ENCODE measurements at regions of chr2 and their contacts with region 1.

Region 1: DNA sequence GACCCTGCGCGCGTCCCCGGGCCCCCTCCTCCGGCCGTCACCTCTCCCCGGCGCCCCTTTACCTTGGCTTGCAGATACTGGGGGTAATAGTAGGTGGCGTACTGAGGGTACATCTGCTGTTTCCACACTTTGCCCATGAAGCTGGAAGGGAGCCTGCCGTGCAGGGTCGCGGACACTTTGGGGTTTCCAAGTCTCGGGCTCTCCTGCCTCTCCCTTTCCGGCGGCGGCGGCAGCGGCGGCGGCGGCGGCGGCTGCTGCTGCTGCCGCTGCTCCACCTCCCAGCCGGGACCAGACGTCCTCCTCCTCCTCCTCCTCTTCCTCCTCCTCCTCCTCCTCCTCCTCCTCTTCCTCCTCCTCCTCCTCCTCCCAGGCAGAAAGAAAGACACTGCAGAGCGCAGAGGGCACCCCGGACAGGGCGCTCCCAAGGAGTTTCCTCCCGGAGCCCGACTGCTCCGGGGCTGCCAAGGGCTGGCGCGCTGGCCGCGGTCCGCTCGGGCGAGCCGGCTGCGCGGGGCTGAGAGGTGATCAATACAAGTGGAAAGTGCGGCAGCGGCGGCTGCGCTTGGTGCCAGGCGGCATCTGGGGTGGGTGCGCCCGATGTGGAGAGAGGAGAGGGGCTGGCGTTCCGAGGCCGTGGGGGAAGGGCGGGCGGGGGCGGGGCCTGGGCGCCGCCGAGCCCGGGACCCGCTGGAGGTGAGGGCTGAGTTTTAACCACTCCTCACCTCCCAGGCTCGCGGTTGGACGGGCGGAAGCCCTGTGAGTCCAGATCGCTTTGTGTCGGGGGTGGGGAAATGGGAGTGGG is at the start of gene RBMS1:
- DNase-seq: peak; percentile 74 to 84 (median 80)
- ATAC-seq: peak; percentile 72 to 83 (median 80)
- H3K4me3 ChIP-seq: peak within 1 kb of the TSS; percentile 72 to 98 (median 88)
- H3K27ac ChIP-seq: peak within 1 kb of the TSS; percentile 94 to 98 (median 98)
- H3K4me1 ChIP-seq: peaks cover 0 to 40% (median 14%) of the 10 kb centered on the region in 12 donors
- H3K27me3 ChIP-seq: no peaks in the 10 kb centered on the region
- CTCF ChIP-seq: peak in 1 of 12 donors; percentile 7
- POLR2A ChIP-seq: peak in 1 of 2 donors; percentile 42
- total RNA-seq, gene RBMS1: 44.2 to 102 (median 61.5) TPM

Region 2: DNA sequence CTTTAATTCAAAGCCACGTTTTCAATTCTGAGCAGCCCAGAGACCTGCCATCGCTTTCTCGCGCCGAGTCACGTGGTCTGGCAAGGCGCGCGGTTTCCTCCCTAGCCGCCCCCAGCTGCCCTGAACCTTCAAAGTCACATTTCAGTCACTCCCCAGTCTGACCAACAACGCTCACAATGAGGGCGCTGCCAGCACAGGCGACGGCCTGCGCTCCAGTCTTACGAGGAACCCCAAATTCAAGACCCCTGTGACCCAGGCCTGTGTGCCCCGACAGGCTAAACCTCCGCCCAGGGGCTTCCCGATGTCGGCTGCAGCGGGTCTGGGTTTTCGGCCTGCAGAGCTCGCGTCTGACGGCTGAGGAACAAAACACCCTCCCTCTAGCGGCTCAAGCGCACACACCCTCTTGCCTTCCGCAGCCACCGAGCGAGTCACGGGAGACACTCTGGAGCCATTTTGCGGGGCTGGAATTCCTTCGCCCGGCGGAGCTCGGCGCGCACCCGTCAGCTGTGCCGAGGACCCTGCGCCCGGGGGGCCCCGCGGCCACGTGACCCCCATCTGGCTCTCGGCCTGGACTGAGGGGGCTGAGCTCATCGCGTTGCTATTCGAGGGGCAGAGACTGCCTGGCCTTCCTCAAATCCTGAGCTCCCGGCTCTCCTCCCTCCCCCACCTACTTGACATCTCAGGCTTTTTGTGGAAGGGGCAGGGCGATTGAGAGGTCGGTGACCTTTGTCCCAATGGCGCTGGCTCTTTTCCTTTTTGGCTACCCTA is 223.4 kb before region 1 on chr2:
- intact Hi-C with region 1: loop called in 3 of 10 experiments (anchors 2 to 5 kb)
- DNase-seq: peak; percentile 92 to 96 (median 93)
- ATAC-seq: peak; percentile 89 to 91 (median 90)
- H3K4me3 ChIP-seq: peak overlapping the region; percentile 16 to 66 (median 52)
- H3K27ac ChIP-seq: peak overlapping the region; percentile 85 to 98 (median 96)
- H3K4me1 ChIP-seq: peaks cover 0 to 51% (median 26%) of the 10 kb centered on the region in 12 donors
- H3K27me3 ChIP-seq: no peaks in the 10 kb centered on the region
- CTCF ChIP-seq: peak; percentile 55 to 87 (median 70)
- POLR2A ChIP-seq: peak in 1 of 2 donors; percentile 57

Region 3: DNA sequence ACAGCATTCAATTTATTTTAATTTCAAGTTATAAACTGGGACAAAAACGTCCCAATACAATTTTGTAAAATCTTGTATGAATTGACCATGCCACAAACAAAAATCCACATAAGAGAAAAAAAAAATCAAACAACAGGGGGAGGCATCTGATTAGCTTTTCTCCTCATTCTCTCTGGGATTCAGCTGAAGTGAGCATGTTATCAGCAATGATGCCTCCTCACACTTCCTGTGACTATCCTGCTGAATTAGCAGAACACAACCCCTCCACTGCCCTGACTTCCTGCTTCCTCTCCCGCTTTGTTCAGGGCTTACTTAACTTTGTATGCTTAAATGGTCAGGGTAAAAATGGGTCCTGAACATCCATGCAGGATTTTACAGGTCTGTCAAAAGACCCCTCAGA is 161.1 kb before region 1 on chr2:
- intact Hi-C with region 1: loop called in 7 of 10 experiments (anchors 5 to 10 kb)
- DNase-seq: peak in 1 of 5 donors; percentile 38
- ATAC-seq: peak in 3 of 4 donors; percentile 55 to 67 (median 64)
- H3K4me3 ChIP-seq: no peak overlapping the region
- H3K27ac ChIP-seq: peak overlapping the region in 9 of 12 donors; percentile 39 to 76 (median 65)
- H3K4me1 ChIP-seq: peaks cover 3 to 98% (median 95%) of the 10 kb centered on the region in 12 donors
- H3K27me3 ChIP-seq: no peaks in the 10 kb centered on the region
- CTCF ChIP-seq: peak in 7 of 12 donors; percentile 13 to 32 (median 22)
- POLR2A ChIP-seq: no peak

Region 4: DNA sequence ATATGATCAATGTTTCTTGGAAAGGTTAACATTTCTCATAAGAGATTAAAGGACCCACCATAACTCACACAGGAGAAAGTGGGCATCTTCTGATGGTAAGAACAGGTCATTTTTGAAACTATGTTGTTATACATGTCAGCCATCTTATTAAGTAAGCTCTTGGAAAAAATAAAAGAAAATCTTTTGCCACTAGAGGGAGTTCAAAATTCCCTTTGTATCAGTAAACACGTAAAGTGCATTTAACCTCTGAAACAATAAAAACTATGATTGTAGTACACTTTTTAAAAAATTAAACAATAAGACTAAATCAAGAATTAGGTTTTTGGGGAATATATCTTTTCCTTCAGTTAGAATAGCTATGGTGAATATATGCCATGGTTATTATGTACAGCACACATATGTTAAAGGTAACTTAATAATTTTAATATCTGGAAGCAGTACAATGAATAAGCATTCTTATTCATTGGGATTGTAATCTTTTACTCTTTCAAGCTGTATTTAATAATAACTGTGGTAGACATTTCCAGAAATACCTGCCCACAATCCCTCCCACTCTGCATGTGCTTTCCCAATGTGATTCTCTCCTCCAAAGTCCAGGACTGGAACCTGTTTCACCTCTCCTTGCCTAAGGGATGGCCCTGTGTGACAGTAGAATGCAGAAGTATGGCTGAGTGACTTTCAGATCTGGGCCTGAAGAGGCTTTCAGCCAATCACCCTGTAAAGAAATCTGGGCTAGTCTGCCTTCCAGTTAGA is 64.0 kb before region 1 on chr2:
- intact Hi-C with region 1: loop called in 7 of 10 experiments (anchors 2 to 10 kb)
- DNase-seq: no peak
- ATAC-seq: peak in 1 of 4 donors; percentile 40
- H3K4me3 ChIP-seq: no peak overlapping the region
- H3K27ac ChIP-seq: peak overlapping the region in 10 of 12 donors; percentile 38 to 82 (median 75)
- H3K4me1 ChIP-seq: peaks cover 0 to 70% (median 53%) of the 10 kb centered on the region in 12 donors
- H3K27me3 ChIP-seq: no peaks in the 10 kb centered on the region
- CTCF ChIP-seq: peak; percentile 42 to 70 (median 60)
- POLR2A ChIP-seq: no peak

Region 5: GRCh38 chr2:160596441-160596840 is 103.0 kb after region 1 on chr2:
- intact Hi-C with region 1: no loop called
- DNase-seq: no peak
- ATAC-seq: no peak
- H3K4me3 ChIP-seq: no peak overlapping the region
- H3K27ac ChIP-seq: no peak overlapping the region
- H3K4me1 ChIP-seq: no peaks in the 10 kb centered on the region
- H3K27me3 ChIP-seq: no peaks in the 10 kb centered on the region
- CTCF ChIP-seq: no peak
- POLR2A ChIP-seq: no peak

Region 6: DNA sequence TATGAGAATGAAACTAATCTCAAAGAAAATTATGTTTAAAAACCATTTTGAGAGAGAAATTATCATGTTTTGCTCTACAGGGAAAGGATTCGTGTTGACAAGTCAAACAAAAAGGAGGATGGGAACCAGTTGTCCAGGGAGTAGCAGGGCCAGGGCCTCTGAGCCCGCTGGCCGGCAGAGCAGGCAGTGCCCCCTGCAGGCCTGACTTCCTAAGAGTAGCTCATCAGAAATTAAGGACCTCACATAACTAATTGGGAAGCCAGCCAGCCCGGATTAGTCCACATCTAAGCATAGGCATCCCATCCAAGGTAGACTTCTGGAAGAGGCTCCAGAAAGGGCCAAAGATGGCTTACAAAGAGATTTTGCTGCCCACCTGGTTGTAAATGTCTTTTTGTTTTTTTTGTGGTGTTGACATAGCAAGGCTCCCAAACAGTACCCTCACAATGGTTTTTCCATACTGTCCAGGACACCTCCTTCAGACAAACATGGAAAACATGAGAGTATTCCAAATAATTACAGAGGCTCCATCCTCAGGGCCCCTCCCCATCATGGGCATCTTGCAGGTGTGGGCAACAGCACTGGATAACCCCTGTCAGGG is 425.6 kb after region 1 on chr2:
- intact Hi-C with region 1: loop called in 2 of 10 experiments (anchors 10 kb)
- DNase-seq: peak; percentile 67 to 83 (median 74)
- ATAC-seq: peak; percentile 85 to 91 (median 90)
- H3K4me3 ChIP-seq: no peak overlapping the region
- H3K27ac ChIP-seq: peak overlapping the region in 3 of 12 donors; percentile 6 to 31 (median 17)
- H3K4me1 ChIP-seq: peaks cover 0 to 45% (median 18%) of the 10 kb centered on the region in 12 donors
- H3K27me3 ChIP-seq: no peaks in the 10 kb centered on the region
- CTCF ChIP-seq: peak; percentile 47 to 75 (median 66)
- POLR2A ChIP-seq: no peak

Region 7: GRCh38 chr2:161063157-161063954 is 569.9 kb after region 1 on chr2:
- intact Hi-C with region 1: loop called in 1 of 10 experiments (anchors 10 kb)
- DNase-seq: peak in 4 of 5 donors; percentile 59 to 69 (median 66)
- ATAC-seq: peak in 3 of 4 donors; percentile 80 to 84 (median 82)
- H3K4me3 ChIP-seq: peak overlapping the region in 3 of 12 donors; percentile 2 to 20 (median 2)
- H3K27ac ChIP-seq: no peak overlapping the region
- H3K4me1 ChIP-seq: peaks cover 0 to 9% (median 0%) of the 10 kb centered on the region in 12 donors
- H3K27me3 ChIP-seq: no peaks in the 10 kb centered on the region
- CTCF ChIP-seq: peak; percentile 74 to 94 (median 86)
- POLR2A ChIP-seq: no peak

Measured in heart left ventricle (tissue), 16 donors.